Activated B cell treated with CpG ODN at 0.5 μM for 24 hours (primary cell): ENCODE measurements at regions of chr16 and their contacts with region 1.

Region 1: GRCh38 chr16:31868691-31869167 is 4.9 kb upstream of the ZNF267 start:
- DNase-seq: peak; percentile 60
- ATAC-seq: no peak
- H3K4me3 Mint-ChIP-seq: peak overlapping the region; percentile 41
- H3K27ac Mint-ChIP-seq: peak overlapping the region; percentile 66
- H3K4me1 Mint-ChIP-seq: peaks cover 46% of the 10 kb centered on the region
- H3K27me3 Mint-ChIP-seq: peaks cover 6% of the 10 kb centered on the region
- CTCF ChIP-seq: peak; percentile 35

Region 2: GRCh38 chr16:31108035-31108793 is 760.5 kb before region 1 on chr16 and contains the start of gene BCKDK:
- CTCF ChIA-PET with region 1: no interaction called
- POLR2A ChIA-PET with region 1: no interaction called
- intact Hi-C with region 1: loop called (anchors 5 kb)
- DNase-seq: peak; percentile 69
- ATAC-seq: peak; percentile 81
- H3K4me3 Mint-ChIP-seq: peak within 1 kb of the TSS; percentile 83
- H3K27ac Mint-ChIP-seq: peak within 1 kb of the TSS; percentile 77
- H3K4me1 Mint-ChIP-seq: peaks cover 19% of the 10 kb centered on the region
- H3K27me3 Mint-ChIP-seq: no peaks in the 10 kb centered on the region
- CTCF ChIP-seq: no peak
- total RNA-seq, gene BCKDK: 24.8 and 27.3 TPM in 2 replicates

Region 3: DNA sequence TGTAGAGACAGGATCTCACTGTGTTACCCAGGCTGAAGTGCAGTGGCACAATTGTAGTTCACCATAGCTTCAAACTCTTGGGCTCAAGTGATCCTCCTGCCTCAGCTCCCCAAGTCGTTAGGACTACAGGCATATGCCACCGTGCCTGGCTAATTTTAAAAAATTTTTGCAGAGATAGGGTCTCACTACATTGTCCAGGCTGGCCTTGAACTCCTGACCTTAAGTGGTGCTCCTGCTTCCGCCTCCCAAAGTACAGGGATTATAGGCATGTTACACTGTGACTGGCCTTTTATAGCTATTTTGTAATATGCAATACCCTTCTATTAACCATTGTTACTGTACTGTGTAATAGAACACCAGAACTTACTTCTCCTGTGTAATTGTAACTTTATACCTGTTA is 134.5 kb before region 1 on chr16:
- CTCF ChIA-PET with region 1: no interaction called
- POLR2A ChIA-PET with region 1: no interaction called
- intact Hi-C with region 1: no loop called
- DNase-seq: no peak
- ATAC-seq: no peak
- H3K4me3 Mint-ChIP-seq: no peak overlapping the region
- H3K27ac Mint-ChIP-seq: no peak overlapping the region
- H3K4me1 Mint-ChIP-seq: peaks cover 4% of the 10 kb centered on the region
- H3K27me3 Mint-ChIP-seq: no peaks in the 10 kb centered on the region
- CTCF ChIP-seq: no peak